ENCODE measurements at regions of chr20 and their contacts with region 1.

Region 1: DNA sequence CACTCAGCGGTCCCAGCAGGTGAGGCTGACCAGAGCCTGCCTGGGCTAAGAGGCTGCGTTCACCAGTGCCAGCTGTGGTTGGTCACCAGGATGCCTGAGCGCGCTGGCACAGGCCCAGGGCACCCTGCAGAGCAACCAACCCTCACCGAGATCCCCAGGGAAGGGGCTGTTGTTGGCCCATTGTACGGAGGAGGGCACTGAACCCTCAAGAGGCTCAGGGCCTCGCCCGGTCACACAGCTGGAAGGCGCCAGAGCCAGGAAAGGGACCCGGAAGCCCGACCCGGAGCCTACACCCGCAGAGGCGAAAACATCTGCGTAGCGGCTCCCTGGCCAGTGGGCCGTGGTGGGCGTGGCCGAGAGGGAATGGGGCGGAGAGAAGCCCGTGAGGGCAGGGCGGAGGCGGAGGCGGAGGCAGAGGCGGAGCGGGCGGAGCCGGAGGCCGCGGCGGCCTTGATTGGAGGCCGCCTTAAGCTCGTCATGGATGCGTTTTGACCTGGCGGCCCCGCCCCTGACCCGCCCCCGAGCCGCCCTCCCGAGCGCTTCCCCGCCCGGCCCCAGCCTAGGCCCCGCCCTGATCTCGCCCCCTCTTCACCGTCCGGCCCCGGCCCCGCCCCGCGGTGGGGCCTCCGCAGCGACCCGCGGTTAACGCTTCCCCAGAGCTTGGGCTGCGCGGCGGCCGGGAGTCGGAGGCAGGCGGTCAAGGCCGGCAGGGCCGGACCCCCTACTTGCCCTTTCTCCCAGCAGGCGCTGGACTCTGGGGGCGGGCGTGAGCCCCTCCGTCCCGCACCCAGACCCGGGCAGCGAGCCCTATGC is 2.2 kb upstream of the MRGBP start:
- DNase-seq: peak; percentile 95
- H3K4me3 ChIP-seq: peak overlapping the region; percentile 64 to 74
- H3K27ac ChIP-seq: peak overlapping the region; percentile 71 to 88
- H3K4me1 ChIP-seq: peaks cover 22 to 23% of the 10 kb centered on the region in 2 experiments; a peak in 3 of 4 replicates
- H3K27me3 ChIP-seq: no peaks in the 10 kb centered on the region
- CTCF ChIP-seq: no peak
- EP300 ChIP-seq: no peak
- RAD21 ChIP-seq: no peak

Region 2: GRCh38 chr20:62500237-62500864 is 293.8 kb before region 1 on chr20:
- CTCF ChIA-PET with region 1: interaction called, 26 read pairs
- POLR2A ChIA-PET with region 1: no interaction called
- DNase-seq: peak; percentile 92
- H3K4me3 ChIP-seq: no peak overlapping the region
- H3K27ac ChIP-seq: no peak overlapping the region
- H3K4me1 ChIP-seq: peaks cover 0 to 11% of the 10 kb centered on the region in 2 experiments; a peak in 1 of 4 replicates
- H3K27me3 ChIP-seq: no peaks in the 10 kb centered on the region
- CTCF ChIP-seq: peak; percentile 73
- EP300 ChIP-seq: no peak
- RAD21 ChIP-seq: peak; percentile 83

Region 3: DNA sequence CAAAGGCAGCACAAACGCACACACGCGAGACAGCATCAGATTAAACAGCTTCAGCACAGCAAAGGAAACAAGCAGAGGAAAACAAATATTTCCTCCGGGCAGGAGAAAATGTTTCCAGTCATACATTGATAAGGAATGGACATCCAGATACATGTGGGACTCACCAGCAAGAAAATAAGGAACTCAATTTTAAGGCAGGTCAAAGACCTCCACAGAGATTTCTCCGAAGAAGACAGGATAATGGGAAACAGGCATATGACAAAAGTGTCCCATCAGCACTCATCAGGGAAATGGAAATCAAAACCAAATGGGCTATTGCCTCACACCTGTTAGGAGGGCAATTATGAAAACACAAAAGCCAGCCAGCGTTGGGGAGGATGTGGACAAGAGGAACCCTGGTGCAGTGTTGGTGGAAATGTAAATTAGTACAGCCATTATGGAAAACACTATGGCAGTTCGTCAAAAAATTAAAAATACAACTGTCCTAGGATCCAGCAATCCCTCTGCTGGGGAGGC is 161.5 kb before region 1 on chr20:
- CTCF ChIA-PET with region 1: interaction called, 16 read pairs
- POLR2A ChIA-PET with region 1: no interaction called
- DNase-seq: no peak
- H3K4me3 ChIP-seq: no peak overlapping the region
- H3K27ac ChIP-seq: peak overlapping the region in 1 of 2 experiments; percentile 77; a peak in 2 of 4 replicates
- H3K4me1 ChIP-seq: peaks cover 0 to 49% of the 10 kb centered on the region in 2 experiments; a peak in 3 of 4 replicates
- H3K27me3 ChIP-seq: peaks cover 11% of the 10 kb centered on the region
- CTCF ChIP-seq: no peak
- EP300 ChIP-seq: no peak
- RAD21 ChIP-seq: no peak

Region 4: GRCh38 chr20:62668441-62669027 is 125.6 kb before region 1 on chr20:
- CTCF ChIA-PET with region 1: interaction called, 162 read pairs
- POLR2A ChIA-PET with region 1: no interaction called
- DNase-seq: peak; percentile 96
- H3K4me3 ChIP-seq: no peak overlapping the region
- H3K27ac ChIP-seq: no peak overlapping the region
- H3K4me1 ChIP-seq: no peaks in the 10 kb centered on the region; a peak in 1 of 4 replicates
- H3K27me3 ChIP-seq: no peaks in the 10 kb centered on the region
- CTCF ChIP-seq: peak; percentile 86
- EP300 ChIP-seq: no peak
- RAD21 ChIP-seq: peak; percentile 96

Region 5: GRCh38 chr20:62704301-62704948 is 89.7 kb before region 1 on chr20:
- CTCF ChIA-PET with region 1: interaction called, 31 read pairs
- POLR2A ChIA-PET with region 1: no interaction called
- DNase-seq: peak; percentile 85
- H3K4me3 ChIP-seq: no peak overlapping the region
- H3K27ac ChIP-seq: peak overlapping the region; percentile 30 to 92; a peak in 3 of 4 replicates
- H3K4me1 ChIP-seq: peaks cover 19 to 27% of the 10 kb centered on the region in 2 experiments; a peak in 3 of 4 replicates
- H3K27me3 ChIP-seq: peaks cover 13% of the 10 kb centered on the region
- CTCF ChIP-seq: peak; percentile 17; the same call in 1 of the 2 replicates
- EP300 ChIP-seq: peak in 1 of 2 experiments; percentile 54; a peak in 1 of 4 replicates
- RAD21 ChIP-seq: peak; percentile 14; the same call in 1 of the 2 replicates

Region 6: DNA sequence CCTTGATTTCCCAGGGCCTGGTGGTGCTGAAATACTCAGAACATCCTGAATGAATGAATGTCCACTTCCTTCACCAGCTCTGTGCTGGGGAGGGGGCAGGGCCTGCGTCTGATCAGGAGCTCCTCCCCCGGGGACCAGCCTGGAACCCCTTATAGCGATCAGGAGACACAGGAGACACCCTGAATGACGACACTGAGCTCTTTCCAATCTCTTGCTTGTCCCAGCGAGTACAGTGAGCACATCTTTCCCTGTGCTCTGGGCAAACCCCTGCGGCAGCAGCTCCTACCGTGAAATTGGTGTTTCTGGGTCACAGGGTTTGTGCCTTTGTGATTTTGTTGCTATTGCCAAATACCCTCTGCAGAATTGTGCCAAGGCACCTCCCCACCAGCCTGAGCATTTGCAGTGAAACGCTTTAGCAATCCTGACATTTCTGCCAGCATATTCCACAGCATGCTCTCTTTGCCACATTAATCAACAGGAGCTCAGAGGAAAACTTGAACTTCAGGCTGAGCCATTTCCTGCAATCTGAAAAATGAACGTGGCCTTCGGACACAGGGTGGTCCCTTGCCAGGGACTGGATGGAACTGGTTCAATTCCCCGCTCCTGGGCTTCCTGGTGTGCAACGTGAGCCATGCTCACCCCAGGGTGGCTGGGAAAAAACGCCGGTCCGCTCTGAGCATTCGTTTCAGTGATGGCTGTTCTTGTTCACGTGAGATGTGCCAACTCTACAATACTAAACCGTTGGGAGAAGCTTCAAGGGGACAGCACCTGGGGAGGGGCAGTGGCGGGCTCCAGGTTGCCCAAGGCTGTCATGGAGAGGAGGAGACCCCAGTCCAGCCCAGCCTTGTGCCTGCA is 20.9 kb before region 1 on chr20:
- CTCF ChIA-PET with region 1: interaction called, 31 read pairs
- POLR2A ChIA-PET with region 1: no interaction called
- DNase-seq: no peak
- H3K4me3 ChIP-seq: no peak overlapping the region
- H3K27ac ChIP-seq: no peak overlapping the region
- H3K4me1 ChIP-seq: peaks cover 0 to 20% of the 10 kb centered on the region in 2 experiments; a peak in 1 of 4 replicates
- H3K27me3 ChIP-seq: no peaks in the 10 kb centered on the region
- CTCF ChIP-seq: no peak
- EP300 ChIP-seq: no peak
- RAD21 ChIP-seq: no peak

Region 7: DNA sequence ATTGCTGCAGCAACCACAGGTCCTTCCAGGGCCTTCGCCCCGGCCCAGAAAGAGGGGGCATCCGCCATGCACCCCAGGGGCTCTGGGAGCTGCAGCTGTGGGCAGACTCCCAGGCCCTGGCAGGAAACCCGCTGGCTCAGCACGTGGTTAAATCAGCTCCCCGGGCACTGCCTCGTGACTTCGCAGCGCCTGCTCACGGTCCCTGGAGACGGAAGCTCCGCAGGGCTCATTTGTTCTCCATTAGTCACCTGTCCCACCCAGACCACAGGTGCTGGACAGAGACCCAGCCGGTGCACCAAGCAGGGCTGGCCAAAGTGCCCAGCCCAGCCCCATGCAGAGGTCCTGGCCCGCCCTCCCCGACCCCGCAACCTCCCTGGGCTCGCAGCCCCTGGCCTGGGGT is 663.6 kb after region 1 on chr20:
- CTCF ChIA-PET with region 1: no interaction called
- POLR2A ChIA-PET with region 1: no interaction called
- DNase-seq: peak; percentile 69
- H3K4me3 ChIP-seq: no peak overlapping the region
- H3K27ac ChIP-seq: peak overlapping the region in 1 of 2 experiments; percentile 99; a peak in 2 of 4 replicates
- H3K4me1 ChIP-seq: peaks cover 9 to 96% of the 10 kb centered on the region in 2 experiments; a peak in 2 of 4 replicates
- H3K27me3 ChIP-seq: no peaks in the 10 kb centered on the region; the same call in 1 of the 2 replicates
- CTCF ChIP-seq: no peak
- EP300 ChIP-seq: no peak
- RAD21 ChIP-seq: no peak